HEK293 (cell line): ENCODE measurements at regions of chr19 and their contacts with region 1.

Region 1: DNA sequence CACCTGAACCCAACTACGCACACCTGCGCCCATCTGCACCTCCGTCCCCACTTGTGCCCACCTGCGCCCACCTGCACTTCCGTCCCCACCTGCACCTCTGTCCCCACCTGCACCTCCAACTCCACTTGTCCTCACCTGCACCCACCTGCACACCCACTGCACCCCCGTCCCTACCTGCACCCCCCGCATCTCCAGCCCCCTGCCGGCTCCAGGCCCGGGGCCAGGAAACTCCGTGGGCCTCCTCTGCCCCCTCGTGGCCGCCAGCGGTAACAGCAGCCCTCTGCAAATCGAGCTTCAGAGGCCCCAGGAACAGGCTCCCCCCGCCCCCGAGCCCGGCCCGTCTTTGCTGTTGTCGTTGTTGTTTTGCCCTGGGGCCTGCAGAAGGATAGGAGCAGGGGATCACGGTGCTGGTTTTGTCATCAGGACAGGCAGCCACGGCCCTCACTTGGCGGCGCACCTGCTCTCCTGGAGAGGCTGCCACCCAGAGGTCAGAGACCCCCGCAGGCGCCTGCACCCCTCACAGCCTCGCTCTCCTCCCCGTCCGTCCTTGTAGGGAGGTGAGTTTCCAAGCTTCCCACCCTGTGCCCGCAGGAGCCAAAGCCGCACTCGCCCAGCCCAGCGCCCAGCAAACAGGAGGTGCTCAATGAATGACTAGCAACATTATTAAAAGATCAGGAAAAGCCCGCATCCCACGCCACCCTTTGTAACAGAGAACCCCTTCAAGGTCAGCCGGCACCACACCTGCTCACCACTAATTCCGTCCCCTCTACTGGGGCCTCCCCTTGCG is 65.4 kb downstream of the GNG7 start:
- H3K4me3 ChIP-seq: no peak overlapping the region
- H3K27ac ChIP-seq: no peak overlapping the region
- H3K4me1 ChIP-seq: no peaks in the 10 kb centered on the region
- CTCF ChIP-seq: peak; percentile 95

Region 2: GRCh38 chr19:2618611-2619010 is 18.5 kb before region 1 on chr19:
- CTCF ChIA-PET with region 1: interaction called, 19 read pairs
- POLR2A ChIA-PET with region 1: interaction called, 4 read pairs
- H3K4me3 ChIP-seq: no peak overlapping the region
- H3K27ac ChIP-seq: no peak overlapping the region
- H3K4me1 ChIP-seq: no peaks in the 10 kb centered on the region
- CTCF ChIP-seq: no peak